ENCODE measurements at regions of chr17 and their contacts with region 1.

Region 1: DNA sequence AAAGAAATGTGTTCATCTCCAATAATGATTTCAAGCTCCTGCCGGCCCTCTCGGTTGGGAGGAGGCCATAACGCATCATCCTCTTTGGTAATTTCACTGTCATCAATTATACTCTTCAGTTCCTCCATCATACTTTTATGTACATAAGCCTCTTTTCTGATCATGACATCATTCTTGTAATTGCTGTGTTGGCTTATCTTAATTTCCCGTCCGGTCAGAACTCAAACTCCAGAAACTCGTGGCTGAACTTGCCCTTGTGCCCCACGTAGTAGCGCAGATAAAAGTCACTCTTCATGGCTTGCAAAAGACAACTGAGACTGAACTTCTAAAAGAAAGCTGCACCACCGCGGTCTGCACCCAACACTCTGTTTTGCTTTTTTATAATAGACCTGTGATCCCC is 13.6 kb downstream of the TMEM220 start:
- DNase-seq: no peak
- H3K4me3 ChIP-seq: no peak overlapping the region
- H3K27ac ChIP-seq: no peak overlapping the region
- H3K4me1 ChIP-seq: no peaks in the 10 kb centered on the region
- H3K27me3 ChIP-seq: no peaks in the 10 kb centered on the region
- CTCF ChIP-seq: no peak
- EP300 ChIP-seq: no peak
- POLR2A ChIP-seq: no peak

Region 2: GRCh38 chr17:10668771-10669170 is 47.4 kb before region 1 on chr17:
- intact Hi-C with region 1: loop called (anchors 5 kb)
- DNase-seq: no peak
- H3K4me3 ChIP-seq: no peak overlapping the region
- H3K27ac ChIP-seq: no peak overlapping the region
- H3K4me1 ChIP-seq: no peaks in the 10 kb centered on the region
- H3K27me3 ChIP-seq: no peaks in the 10 kb centered on the region
- CTCF ChIP-seq: no peak
- EP300 ChIP-seq: no peak
- POLR2A ChIP-seq: no peak

Region 3: DNA sequence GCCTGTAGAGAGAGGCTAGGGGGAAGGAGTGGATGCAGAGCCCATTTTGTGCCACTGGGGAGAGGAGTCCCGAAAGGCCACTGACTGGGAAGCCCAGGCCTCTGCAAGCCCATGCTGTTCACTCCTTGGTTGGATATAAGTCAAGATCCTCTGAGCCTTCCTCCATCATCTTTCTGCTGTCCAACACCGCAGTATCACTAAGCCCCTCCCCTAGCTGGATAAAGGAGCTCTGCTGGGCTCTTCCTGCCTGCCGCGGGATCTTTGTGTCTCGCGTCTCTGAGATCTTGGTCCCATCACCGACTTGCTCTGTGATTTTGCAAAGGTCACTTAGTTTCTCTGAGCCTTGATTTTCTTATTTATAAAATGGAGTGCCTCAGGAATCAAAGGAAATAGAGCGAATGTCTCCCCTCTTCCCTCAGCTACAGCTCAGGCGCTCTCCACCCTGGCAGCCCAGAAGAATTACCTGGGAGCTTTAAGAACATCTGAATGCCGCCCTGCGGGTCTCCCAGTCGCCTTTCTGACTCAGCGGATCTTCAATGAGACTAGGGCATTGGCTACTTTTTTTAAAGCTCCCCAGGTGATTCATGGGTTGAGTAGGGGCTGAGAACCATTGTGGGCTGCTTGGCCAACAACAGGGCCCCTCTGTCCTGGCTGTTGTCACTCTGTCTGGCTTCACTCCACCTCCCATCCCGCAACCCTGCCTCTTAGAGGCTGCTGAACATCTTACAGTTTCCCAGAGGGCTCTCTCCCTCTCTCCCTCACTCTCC is 38.8 kb after region 1 on chr17:
- intact Hi-C with region 1: no loop called
- DNase-seq: no peak
- H3K4me3 ChIP-seq: no peak overlapping the region
- H3K27ac ChIP-seq: no peak overlapping the region
- H3K4me1 ChIP-seq: no peaks in the 10 kb centered on the region
- H3K27me3 ChIP-seq: no peaks in the 10 kb centered on the region
- CTCF ChIP-seq: no peak
- EP300 ChIP-seq: no peak
- POLR2A ChIP-seq: no peak

Region 4: GRCh38 chr17:10772425-10773380 is 56.5 kb after region 1 on chr17:
- intact Hi-C with region 1: no loop called
- DNase-seq: no peak
- H3K4me3 ChIP-seq: no peak overlapping the region
- H3K27ac ChIP-seq: no peak overlapping the region
- H3K4me1 ChIP-seq: no peaks in the 10 kb centered on the region
- H3K27me3 ChIP-seq: no peaks in the 10 kb centered on the region
- CTCF ChIP-seq: peak in 2 of 3 experiments; percentile 17 to 39
- EP300 ChIP-seq: no peak
- POLR2A ChIP-seq: no peak

Measured in esophagus muscularis mucosa (tissue), 4 donors.